ENCODE measurements at regions of chr9 and their contacts with region 1.

Region 1: GRCh38 chr9:114587385-114588202 is at the start of gene ATP6V1G1:
- DNase-seq: peak; percentile 96 to 99 (median 99)
- H3K4me3 ChIP-seq: peak within 1 kb of the TSS; percentile 81
- H3K4me3 Mint-ChIP-seq: peak within 1 kb of the TSS; percentile 97 to 100 (median 99)
- H3K27ac ChIP-seq: peak within 1 kb of the TSS; percentile 91
- H3K27ac Mint-ChIP-seq: peak within 1 kb of the TSS; percentile 98 to 100 (median 99)
- H3K4me1 ChIP-seq: peaks cover 37% of the 10 kb centered on the region
- H3K4me1 Mint-ChIP-seq: peaks cover 51 to 55% (median 51%) of the 10 kb centered on the region in 3 donors
- H3K27me3 ChIP-seq: no peaks in the 10 kb centered on the region
- H3K27me3 Mint-ChIP-seq: peaks cover 0 to 5% of the 10 kb centered on the region in 2 donors
- total RNA-seq, gene ATP6V1G1: 48.2 to 49.0 TPM

Region 2: DNA sequence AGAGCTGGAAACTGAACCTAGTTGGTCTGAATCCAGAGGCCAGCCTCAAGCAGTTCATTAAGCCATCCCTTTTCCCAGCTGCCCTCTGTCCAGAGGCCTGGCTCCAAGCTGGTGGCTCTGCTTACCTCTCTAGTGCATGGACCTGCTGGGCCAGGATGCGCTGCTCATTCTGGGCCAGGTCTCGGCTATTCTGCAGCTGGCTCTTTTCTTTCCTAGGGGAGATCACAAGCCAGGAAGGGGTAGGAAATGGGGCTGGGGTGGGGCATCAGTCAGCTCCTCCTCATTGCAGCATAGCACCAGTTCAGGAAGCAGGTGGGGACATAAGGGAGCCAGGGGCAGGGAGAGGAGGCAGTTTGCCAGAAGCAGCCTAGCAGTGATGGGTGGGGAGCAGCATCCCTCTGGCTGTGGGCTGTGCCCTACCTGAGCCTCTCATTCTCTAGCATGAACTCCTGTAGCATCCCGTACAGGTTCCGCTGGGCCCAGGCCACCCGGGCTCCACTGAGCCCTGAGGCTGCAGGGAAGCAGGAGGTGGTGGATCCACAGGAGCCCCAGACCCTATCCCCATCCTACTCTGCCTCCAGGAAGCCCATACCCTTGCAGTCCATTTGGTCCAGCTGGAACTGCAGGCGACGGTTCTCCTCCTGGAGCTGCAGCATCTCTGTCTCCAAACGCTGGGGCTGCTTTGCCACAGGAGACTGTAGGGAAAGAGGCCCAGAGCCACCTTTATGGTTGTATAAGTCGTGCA is 493.7 kb before region 1 on chr9:
- CTCF ChIA-PET with region 1: no interaction called
- POLR2A ChIA-PET with region 1: no interaction called
- DNase-seq: no peak
- H3K4me3 ChIP-seq: no peak overlapping the region
- H3K4me3 Mint-ChIP-seq: no peak overlapping the region
- H3K27ac ChIP-seq: no peak overlapping the region
- H3K27ac Mint-ChIP-seq: no peak overlapping the region
- H3K4me1 ChIP-seq: no peaks in the 10 kb centered on the region
- H3K4me1 Mint-ChIP-seq: peaks cover 8 to 15% (median 14%) of the 10 kb centered on the region in 3 donors
- H3K27me3 ChIP-seq: peaks cover 13% of the 10 kb centered on the region
- H3K27me3 Mint-ChIP-seq: peaks cover 27 to 46% of the 10 kb centered on the region in 2 donors

Region 3: DNA sequence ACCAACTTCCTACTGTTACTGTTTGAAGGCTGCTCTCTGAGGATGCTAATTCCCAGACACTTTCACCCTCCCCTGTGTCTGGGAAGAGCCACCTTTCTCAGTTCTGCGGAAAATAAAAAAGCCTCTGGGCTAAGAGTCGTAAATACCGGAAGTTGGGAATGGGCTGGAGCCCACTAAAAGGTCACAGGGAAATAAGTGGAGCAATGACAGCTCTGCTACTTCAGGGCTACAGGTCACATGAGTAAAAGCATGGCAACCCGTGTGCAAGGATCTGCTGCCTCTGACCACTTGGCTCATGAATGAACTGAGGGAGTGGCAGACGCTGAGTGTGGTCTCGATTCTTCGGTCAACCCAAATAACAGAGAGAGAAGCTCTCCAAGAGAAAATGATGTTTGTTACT is 25.8 kb before region 1 on chr9:
- CTCF ChIA-PET with region 1: no interaction called
- POLR2A ChIA-PET with region 1: no interaction called
- DNase-seq: no peak
- H3K4me3 ChIP-seq: no peak overlapping the region
- H3K4me3 Mint-ChIP-seq: no peak overlapping the region
- H3K27ac ChIP-seq: no peak overlapping the region
- H3K27ac Mint-ChIP-seq: no peak overlapping the region
- H3K4me1 ChIP-seq: no peaks in the 10 kb centered on the region
- H3K4me1 Mint-ChIP-seq: no peaks in the 10 kb centered on the region
- H3K27me3 ChIP-seq: no peaks in the 10 kb centered on the region
- H3K27me3 Mint-ChIP-seq: peaks cover 2 to 35% of the 10 kb centered on the region in 2 donors

Region 4: DNA sequence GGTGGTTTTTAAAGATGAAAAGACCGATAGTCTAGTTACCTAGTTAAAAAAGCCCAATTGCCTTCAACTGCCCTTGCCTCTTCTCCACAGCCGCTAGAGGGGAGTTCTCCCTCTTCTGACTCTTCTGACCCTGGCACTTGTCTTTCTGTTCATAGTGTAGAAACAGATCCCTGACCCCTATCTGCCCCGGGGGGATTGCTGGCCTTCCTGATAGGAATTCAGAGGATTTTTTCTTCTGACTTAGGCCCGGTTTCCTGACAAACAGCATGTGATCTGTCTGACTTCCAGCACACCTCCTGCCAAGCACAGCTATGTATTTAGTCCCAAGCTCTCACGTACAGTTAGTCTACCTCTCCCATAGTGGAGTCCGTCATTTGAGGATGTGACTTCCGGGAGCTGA is 18.5 kb after region 1 on chr9:
- CTCF ChIA-PET with region 1: interaction called, 29 read pairs
- POLR2A ChIA-PET with region 1: interaction called, 33 read pairs
- DNase-seq: no peak
- H3K4me3 ChIP-seq: no peak overlapping the region
- H3K4me3 Mint-ChIP-seq: no peak overlapping the region
- H3K27ac ChIP-seq: no peak overlapping the region
- H3K27ac Mint-ChIP-seq: peak overlapping the region in 1 of 8 donors; percentile 36
- H3K4me1 ChIP-seq: peaks cover 8% of the 10 kb centered on the region
- H3K4me1 Mint-ChIP-seq: peaks cover 7 to 13% (median 10%) of the 10 kb centered on the region in 3 donors
- H3K27me3 ChIP-seq: no peaks in the 10 kb centered on the region
- H3K27me3 Mint-ChIP-seq: peaks cover 0 to 4% of the 10 kb centered on the region in 2 donors

Region 5: GRCh38 chr9:114611516-114612271 is 24.1 kb after region 1 on chr9:
- CTCF ChIA-PET with region 1: interaction called, 29 read pairs
- POLR2A ChIA-PET with region 1: interaction called, 33 read pairs
- DNase-seq: peak in 1 of 5 donors; percentile 66
- H3K4me3 ChIP-seq: peak overlapping the region; percentile 98
- H3K4me3 Mint-ChIP-seq: peak overlapping the region; percentile 83 to 93 (median 93)
- H3K27ac ChIP-seq: peak overlapping the region; percentile 61
- H3K27ac Mint-ChIP-seq: peak overlapping the region; percentile 68 to 95 (median 92)
- H3K4me1 ChIP-seq: peaks cover 28% of the 10 kb centered on the region
- H3K4me1 Mint-ChIP-seq: peaks cover 35 to 51% (median 36%) of the 10 kb centered on the region in 3 donors
- H3K27me3 ChIP-seq: no peaks in the 10 kb centered on the region
- H3K27me3 Mint-ChIP-seq: peaks cover 0 to 4% of the 10 kb centered on the region in 2 donors

Region 6: DNA sequence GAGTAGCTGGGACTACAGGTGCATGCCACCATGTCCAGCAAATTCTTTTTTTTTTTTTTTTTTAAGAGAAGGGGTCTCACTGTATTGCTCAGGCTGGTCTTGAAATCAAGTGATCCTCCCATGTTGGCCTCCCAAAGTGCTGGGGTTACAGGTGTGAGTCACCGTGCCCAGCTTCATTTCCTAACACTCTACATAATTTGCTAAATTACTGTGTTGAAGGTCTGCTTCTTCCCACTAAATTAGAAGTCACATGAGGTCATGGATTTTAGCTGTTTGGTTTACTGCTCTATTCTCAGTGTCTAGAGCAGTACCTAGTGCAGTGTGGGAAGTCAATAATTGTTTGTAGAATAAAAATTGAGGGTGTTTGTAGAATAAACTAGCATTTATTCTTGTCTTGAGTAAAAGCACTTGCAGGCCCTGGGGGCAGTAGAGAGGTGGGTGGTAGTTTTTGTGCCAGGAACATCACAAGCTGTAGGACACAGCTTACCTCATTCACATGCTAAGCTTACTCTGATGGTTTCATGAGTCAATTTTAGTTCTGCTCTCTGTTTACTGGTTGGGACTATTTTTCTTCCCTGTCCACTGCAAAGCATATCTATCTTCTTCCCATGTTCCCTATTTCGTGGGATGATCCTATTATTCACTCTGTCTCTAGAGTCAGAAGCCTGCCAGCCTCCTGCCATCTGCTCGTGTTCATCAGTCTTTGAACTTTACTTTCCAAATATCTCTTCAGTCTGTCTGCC is 87.4 kb after region 1 on chr9:
- CTCF ChIA-PET with region 1: no interaction called
- POLR2A ChIA-PET with region 1: no interaction called
- DNase-seq: no peak
- H3K4me3 ChIP-seq: no peak overlapping the region
- H3K4me3 Mint-ChIP-seq: no peak overlapping the region
- H3K27ac ChIP-seq: no peak overlapping the region
- H3K27ac Mint-ChIP-seq: peak overlapping the region in 1 of 8 donors; percentile 89
- H3K4me1 ChIP-seq: no peaks in the 10 kb centered on the region
- H3K4me1 Mint-ChIP-seq: no peaks in the 10 kb centered on the region
- H3K27me3 ChIP-seq: peaks cover 9% of the 10 kb centered on the region
- H3K27me3 Mint-ChIP-seq: peaks cover 11 to 32% of the 10 kb centered on the region in 2 donors